Naive thymus-derived CD4-positive, alpha-beta T cell (primary cell): ENCODE measurements at regions of chr1 and their contacts with region 1.

Region 1: GRCh38 chr1:234722904-234723720 is 113.1 kb upstream of the IRF2BP2 start:
- DNase-seq: peak in 2 of 9 donors; percentile 51 to 68
- ATAC-seq: peak; percentile 12
- H3K4me3 ChIP-seq: peak overlapping the region; percentile 52
- H3K4me3 Mint-ChIP-seq: peak overlapping the region; percentile 51 to 85 (median 82)
- H3K27ac ChIP-seq: peak overlapping the region; percentile 95
- H3K27ac Mint-ChIP-seq: peak overlapping the region; percentile 87 to 99 (median 98)
- H3K4me1 ChIP-seq: peaks cover 39 to 46% of the 10 kb centered on the region in 2 donors
- H3K4me1 Mint-ChIP-seq: peaks cover 46 to 95% (median 84%) of the 10 kb centered on the region in 7 donors
- H3K27me3 ChIP-seq: no peaks in the 10 kb centered on the region
- H3K27me3 Mint-ChIP-seq: no peaks in the 10 kb centered on the region

Region 2: GRCh38 chr1:234478481-234479309 is 244.4 kb before region 1 on chr1 and contains the start of gene TARBP1:
- CTCF ChIA-PET with region 1: no interaction called
- POLR2A ChIA-PET with region 1: no interaction called
- intact Hi-C with region 1: loop called in 1 of 2 experiments (anchors 1 kb)
- DNase-seq: peak; percentile 68 to 87 (median 83)
- ATAC-seq: peak; percentile 82
- H3K4me3 ChIP-seq: peak within 1 kb of the TSS; percentile 79
- H3K4me3 Mint-ChIP-seq: peak within 1 kb of the TSS; percentile 82 to 90 (median 90)
- H3K27ac ChIP-seq: peak within 1 kb of the TSS; percentile 75
- H3K27ac Mint-ChIP-seq: peak within 1 kb of the TSS; percentile 73 to 95 (median 85)
- H3K4me1 ChIP-seq: peaks cover 0 to 16% of the 10 kb centered on the region in 2 donors
- H3K4me1 Mint-ChIP-seq: peaks cover 14 to 44% (median 39%) of the 10 kb centered on the region in 7 donors
- H3K27me3 ChIP-seq: no peaks in the 10 kb centered on the region
- H3K27me3 Mint-ChIP-seq: peaks cover 0 to 19% (median 3%) of the 10 kb centered on the region in 5 donors
- total RNA-seq, gene TARBP1: 45.8 to 49.6 (median 47.5) TPM

Region 3: DNA sequence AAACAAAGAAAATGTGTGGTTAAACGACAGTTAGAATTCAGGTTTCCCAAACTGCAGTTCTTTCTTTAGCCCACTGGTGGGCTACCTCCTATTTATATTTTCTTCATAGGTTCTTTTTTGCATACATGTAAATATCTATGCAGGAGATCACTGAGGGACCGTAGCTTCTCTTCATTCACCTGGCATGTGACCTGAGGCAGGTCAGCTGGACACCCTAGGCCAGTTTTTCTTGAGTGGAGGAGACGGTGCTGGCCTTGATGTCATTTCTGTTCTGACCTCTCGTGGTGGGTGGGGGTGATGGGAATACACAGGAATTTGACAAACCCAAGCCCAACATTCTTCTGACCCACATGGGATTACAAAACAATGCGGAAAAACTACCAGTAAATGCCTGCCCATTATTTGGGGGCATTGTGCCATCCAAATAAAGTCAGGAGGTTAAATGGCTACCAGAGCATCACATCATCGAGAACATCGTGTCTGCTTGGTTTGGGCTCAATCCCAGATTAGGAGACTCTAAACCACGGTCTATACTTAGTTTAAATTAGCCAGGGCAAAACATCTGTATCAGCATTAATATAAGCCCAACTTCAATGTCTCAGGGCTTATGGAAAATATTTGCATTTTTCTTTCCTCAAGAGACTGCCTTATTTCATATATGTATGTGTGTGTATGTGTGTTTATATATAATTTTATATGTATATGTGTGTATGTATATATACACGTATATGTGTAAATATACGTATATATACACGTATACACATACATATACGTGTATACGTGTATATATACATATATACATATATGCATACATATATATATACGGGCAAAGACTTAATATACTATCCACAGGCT is 105.8 kb before region 1 on chr1:
- CTCF ChIA-PET with region 1: interaction called, 9 read pairs
- POLR2A ChIA-PET with region 1: interaction called, 188 read pairs
- intact Hi-C with region 1: no loop called
- DNase-seq: no peak
- ATAC-seq: no peak
- H3K4me3 ChIP-seq: no peak overlapping the region
- H3K4me3 Mint-ChIP-seq: no peak overlapping the region
- H3K27ac ChIP-seq: no peak overlapping the region
- H3K27ac Mint-ChIP-seq: peak overlapping the region in 5 of 9 donors; percentile 13 to 85 (median 28)
- H3K4me1 ChIP-seq: peaks cover 13 to 20% of the 10 kb centered on the region in 2 donors
- H3K4me1 Mint-ChIP-seq: peaks cover 15 to 40% (median 31%) of the 10 kb centered on the region in 7 donors
- H3K27me3 ChIP-seq: no peaks in the 10 kb centered on the region
- H3K27me3 Mint-ChIP-seq: no peaks in the 10 kb centered on the region

Region 4: DNA sequence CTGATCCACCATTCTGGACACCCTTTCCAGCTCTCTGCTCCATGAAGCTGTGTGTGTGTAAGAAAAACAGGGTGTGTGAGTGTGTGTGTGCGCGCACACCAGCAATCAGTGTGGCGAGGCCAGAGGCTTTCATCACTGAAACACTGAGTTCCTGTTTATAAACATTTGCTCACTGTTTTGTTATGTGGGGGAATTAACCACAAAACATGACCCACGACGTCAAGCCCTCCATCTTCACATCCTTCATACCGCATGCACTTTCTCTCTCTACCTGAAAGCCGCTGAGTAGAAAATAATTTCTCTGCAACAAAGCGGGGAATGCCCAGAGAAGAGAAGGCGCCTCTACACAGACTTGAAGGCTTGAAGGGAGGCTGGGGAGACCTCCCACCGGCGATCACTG is 35.7 kb after region 1 on chr1:
- CTCF ChIA-PET with region 1: no interaction called
- POLR2A ChIA-PET with region 1: interaction called, 8 read pairs
- intact Hi-C with region 1: loop called in 1 of 2 experiments (anchors 1 kb)
- DNase-seq: peak in 7 of 9 donors; percentile 59 to 85 (median 68)
- ATAC-seq: peak; percentile 87
- H3K4me3 ChIP-seq: no peak overlapping the region
- H3K4me3 Mint-ChIP-seq: peak overlapping the region in 9 of 10 donors; percentile 29 to 66 (median 49)
- H3K27ac ChIP-seq: no peak overlapping the region
- H3K27ac Mint-ChIP-seq: peak overlapping the region; percentile 57 to 97 (median 85)
- H3K4me1 ChIP-seq: peaks cover 9 to 19% of the 10 kb centered on the region in 2 donors
- H3K4me1 Mint-ChIP-seq: peaks cover 13 to 48% (median 34%) of the 10 kb centered on the region in 7 donors
- H3K27me3 ChIP-seq: no peaks in the 10 kb centered on the region
- H3K27me3 Mint-ChIP-seq: peaks cover 0 to 10% (median 0%) of the 10 kb centered on the region in 5 donors

Region 5: DNA sequence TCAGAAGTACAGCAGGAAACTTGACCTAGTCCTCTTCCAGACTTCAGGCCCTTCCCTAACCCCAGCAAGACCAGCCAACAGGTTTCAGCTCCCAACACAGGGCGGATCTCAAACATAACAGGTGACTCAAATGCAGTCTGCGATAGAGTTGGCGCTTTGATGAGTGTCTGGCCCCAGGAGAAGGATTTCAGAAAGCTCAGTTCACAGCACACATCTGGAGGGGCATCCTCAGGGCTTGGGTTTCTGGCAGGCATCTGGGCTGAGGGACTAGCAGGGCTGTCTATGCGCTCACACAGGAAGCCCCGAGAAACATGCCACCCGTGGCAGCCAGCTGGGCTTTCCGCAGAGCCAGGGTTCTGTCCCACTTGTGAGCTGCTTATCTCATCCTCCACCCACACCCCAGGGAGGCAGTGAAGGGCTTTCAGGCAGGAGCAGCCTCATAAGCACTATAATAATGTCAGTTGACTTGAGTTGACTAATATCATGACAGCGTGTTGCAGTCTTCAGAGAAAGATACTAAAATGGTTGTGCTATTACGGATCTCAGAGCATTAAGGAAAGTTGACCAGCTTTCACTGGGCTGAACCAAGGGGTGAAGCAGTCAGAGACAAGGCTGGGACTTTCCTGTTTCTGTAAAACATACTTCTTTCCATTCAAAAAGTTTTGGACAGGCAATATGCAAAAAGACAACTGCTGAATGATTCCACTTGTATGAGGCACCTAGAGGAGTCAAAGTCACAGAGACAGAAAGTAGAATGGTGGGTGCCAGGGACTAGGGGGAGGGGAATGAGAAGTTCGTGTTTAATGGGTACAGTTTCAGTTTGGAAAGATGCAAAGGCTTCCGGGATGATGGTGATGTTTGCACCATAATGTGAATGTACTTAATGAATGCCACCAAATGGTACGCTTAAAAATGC is 119.9 kb after region 1 on chr1:
- CTCF ChIA-PET with region 1: no interaction called
- POLR2A ChIA-PET with region 1: interaction called, 3 read pairs
- intact Hi-C with region 1: loop called in 1 of 2 experiments (anchors 1 kb)
- DNase-seq: peak in 8 of 9 donors; percentile 7 to 81 (median 30)
- ATAC-seq: peak; percentile 26
- H3K4me3 ChIP-seq: peak overlapping the region; percentile 5
- H3K4me3 Mint-ChIP-seq: peak overlapping the region; percentile 30 to 77 (median 62)
- H3K27ac ChIP-seq: peak overlapping the region; percentile 15
- H3K27ac Mint-ChIP-seq: peak overlapping the region; percentile 30 to 90 (median 77)
- H3K4me1 ChIP-seq: peaks cover 36 to 57% of the 10 kb centered on the region in 2 donors
- H3K4me1 Mint-ChIP-seq: peaks cover 44 to 89% (median 74%) of the 10 kb centered on the region in 7 donors
- H3K27me3 ChIP-seq: no peaks in the 10 kb centered on the region
- H3K27me3 Mint-ChIP-seq: no peaks in the 10 kb centered on the region

Region 6: GRCh38 chr1:234963180-234963903 is 240.2 kb after region 1 on chr1:
- CTCF ChIA-PET with region 1: no interaction called
- POLR2A ChIA-PET with region 1: no interaction called
- intact Hi-C with region 1: loop called (anchors 1 kb)
- DNase-seq: peak; percentile 55 to 90 (median 75)
- ATAC-seq: peak; percentile 93
- H3K4me3 ChIP-seq: peak overlapping the region; percentile 41
- H3K4me3 Mint-ChIP-seq: peak overlapping the region; percentile 68 to 87 (median 80)
- H3K27ac ChIP-seq: peak overlapping the region; percentile 79
- H3K27ac Mint-ChIP-seq: peak overlapping the region; percentile 88 to 97 (median 93)
- H3K4me1 ChIP-seq: peaks cover 36 to 55% of the 10 kb centered on the region in 2 donors
- H3K4me1 Mint-ChIP-seq: peaks cover 55 to 75% (median 69%) of the 10 kb centered on the region in 7 donors
- H3K27me3 ChIP-seq: no peaks in the 10 kb centered on the region
- H3K27me3 Mint-ChIP-seq: no peaks in the 10 kb centered on the region